Calu3 (cell line): ENCODE measurements at regions of chr6 and their contacts with region 1.

Region 1: DNA sequence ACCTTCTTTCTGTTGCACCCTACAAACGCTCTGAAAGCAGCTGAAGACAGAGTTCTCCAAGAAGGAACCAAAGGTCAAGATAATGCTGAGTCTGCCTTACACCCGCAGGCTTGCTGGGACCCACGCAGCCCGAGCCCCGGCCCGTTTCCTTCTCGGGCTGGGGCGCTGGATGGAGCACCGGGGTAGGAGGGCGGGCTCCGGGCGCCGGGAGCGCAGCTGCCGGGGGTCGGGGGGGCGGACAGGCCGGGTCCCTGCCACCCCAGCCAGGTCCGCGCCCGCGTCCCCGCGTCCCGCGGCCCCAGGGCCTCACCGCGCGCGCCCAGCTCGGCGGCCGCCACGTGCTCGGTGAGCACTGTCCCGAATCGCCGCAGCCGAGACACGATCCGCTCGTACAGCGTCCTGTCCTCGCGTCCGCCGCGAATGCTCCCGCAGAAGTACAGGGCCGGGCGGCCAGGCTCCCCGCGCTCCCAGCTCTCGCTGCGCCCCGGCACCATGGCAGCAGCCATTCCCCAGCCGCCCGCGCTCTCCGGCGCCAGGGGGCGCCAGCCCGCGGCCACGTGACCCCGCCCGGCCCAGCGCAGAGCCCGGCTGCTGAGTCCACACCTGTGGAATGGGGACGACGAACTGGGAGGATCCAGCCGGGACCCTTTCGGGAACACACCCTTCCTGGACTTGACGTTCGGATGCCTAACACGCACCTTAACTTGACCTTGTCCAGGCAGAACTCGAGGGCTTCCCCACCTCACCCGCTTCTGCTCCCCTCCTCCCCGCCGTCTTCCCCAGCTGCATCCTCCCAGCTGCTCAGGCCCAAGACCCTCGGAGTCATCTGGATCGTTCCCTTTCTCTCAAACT is at the start of gene DNPH1:
- DNase-seq: peak; percentile 96
- H3K4me3 Mint-ChIP-seq: peak within 1 kb of the TSS; percentile 75
- H3K27ac Mint-ChIP-seq: peak within 1 kb of the TSS; percentile 88
- H3K4me1 Mint-ChIP-seq: peaks cover 22% of the 10 kb centered on the region
- H3K27me3 Mint-ChIP-seq: peaks cover 26% of the 10 kb centered on the region
- CTCF ChIP-seq: peak; percentile 99
- total RNA-seq, gene DNPH1: 82.6 and 86.8 TPM in 2 replicates

Region 2: GRCh38 chr6:43247113-43247999 is 18.2 kb after region 1 on chr6:
- CTCF ChIA-PET with region 1: interaction called, 12 read pairs
- intact Hi-C with region 1: no loop called
- DNase-seq: peak; percentile 94
- H3K4me3 Mint-ChIP-seq: peak overlapping the region; percentile 73
- H3K27ac Mint-ChIP-seq: peak overlapping the region; percentile 32
- H3K4me1 Mint-ChIP-seq: peaks cover 15% of the 10 kb centered on the region
- H3K27me3 Mint-ChIP-seq: peaks cover 33% of the 10 kb centered on the region
- CTCF ChIP-seq: no peak